ENCODE measurements at regions of chr18 and their contacts with region 1.

Region 1: DNA sequence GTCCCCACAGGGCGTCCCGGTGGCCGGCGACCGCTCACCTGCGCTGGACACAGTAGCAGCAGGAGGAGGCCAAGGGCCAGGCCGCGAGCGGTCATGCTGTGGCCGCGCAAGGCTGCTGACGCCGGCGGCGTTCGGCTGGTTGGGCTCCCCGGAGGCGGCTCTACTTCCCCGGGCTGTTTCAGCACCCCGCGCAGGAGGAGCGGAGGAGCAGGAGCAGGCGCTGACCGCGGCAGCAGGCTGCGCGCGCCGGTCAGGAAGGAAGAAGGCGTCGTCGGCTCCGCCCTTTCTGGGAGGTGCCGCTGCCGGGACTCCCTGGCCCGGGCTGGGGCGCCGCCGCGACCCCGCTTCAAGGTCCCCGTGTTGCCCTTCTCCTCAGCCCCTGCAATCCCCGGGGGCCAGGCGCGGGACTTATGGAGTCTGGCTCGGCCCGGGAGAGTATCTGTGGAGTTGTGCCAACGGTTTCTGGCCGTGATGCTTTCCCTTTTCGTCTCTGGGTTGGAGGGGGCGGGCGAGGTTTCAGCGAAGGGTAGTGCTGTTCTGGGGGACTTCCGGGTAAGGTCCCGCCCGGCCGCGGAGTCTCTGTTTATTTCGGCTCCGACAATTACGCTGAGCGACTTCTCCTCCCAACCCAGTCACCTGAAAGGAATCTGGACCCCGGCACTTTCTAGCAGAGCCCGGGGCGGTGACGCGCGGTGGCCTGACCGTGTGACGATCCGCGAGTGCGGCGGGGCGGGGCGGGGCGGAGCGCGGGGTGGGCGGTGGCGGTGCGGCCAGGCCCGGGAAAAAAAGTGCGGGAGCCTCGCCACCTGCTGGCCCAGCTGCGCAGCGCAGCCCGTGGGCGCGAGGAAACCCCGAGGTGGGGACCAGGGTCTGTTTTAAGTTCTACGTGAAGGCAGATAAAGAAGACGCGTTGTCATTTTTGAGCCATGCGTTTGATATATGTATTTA is at the start of gene NPC1:
- H3K4me3 Mint-ChIP-seq: peak within 1 kb of the TSS; percentile 89
- H3K27ac Mint-ChIP-seq: peak within 1 kb of the TSS; percentile 96
- H3K4me1 Mint-ChIP-seq: peaks cover 47% of the 10 kb centered on the region
- H3K27me3 Mint-ChIP-seq: peaks cover 11% of the 10 kb centered on the region

Region 2: DNA sequence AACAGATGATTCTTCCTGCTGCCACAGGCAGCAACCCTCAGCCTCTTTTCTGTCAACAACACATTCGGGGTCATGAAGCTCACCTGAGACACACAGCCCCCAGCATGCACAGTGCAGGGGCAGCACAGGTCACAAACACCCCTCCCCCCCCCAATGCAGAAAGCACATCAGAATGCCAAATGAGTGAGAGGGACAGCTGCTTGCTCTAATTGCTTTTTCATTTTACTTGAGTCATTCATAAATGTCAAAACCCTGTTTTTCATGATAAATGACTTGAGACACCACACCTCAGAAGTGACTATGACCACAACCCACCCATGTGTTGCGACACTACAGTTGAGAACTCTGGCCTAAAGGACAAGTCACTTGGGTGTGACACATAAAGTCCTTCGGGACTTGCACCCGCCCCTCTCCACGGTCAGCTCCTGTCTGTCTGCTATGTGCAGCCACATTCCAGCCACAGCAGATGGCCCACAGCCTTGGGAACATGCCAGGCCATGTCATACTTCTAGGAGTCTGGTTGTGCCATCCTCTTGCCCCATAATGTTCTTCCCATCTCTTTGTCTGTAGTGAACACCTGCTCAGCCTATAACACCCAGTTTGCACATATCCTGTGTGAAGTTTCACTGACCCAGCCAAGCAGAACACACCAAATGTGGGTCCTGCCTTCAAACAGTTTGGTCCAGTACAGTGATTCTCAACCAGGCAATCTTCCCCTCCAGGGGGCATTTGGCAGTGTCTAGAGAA is 163.7 kb before region 1 on chr18:
- intact Hi-C with region 1: no loop called
- H3K4me3 Mint-ChIP-seq: no peak overlapping the region
- H3K27ac Mint-ChIP-seq: peak overlapping the region; percentile 71
- H3K4me1 Mint-ChIP-seq: peaks cover 30% of the 10 kb centered on the region
- H3K27me3 Mint-ChIP-seq: no peaks in the 10 kb centered on the region

Region 3: DNA sequence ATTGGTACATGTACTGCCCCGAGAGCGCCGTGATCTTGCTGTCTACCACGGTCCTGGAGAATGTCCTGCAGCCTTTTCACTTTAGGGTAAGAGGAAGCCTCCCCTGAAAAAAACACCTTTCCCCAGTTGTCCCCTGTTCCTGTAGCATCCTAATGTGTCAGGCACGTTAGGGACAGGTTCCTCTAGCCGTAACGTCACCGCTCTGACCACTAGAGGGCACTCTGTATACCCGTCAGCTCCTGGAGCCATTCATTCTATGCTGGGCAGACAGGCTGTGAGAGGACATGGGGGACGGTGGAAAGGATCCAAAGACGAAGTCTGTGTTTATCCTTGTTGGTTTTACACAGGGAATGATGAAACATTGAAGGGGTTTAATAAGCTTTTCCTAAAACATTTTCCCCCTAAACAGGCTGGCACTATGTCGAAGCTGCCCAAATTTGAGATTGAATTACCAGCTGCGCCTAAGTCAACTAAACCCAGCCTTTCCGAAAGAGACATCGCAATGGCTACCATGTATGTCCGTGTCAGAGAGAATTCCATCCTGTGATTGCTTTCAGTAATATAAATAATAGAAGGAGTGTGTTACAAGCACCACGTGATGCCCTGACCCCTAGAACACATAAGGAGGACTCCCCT is 70.5 kb before region 1 on chr18:
- intact Hi-C with region 1: loop called (anchors 1 kb)
- H3K4me3 Mint-ChIP-seq: no peak overlapping the region
- H3K27ac Mint-ChIP-seq: no peak overlapping the region
- H3K4me1 Mint-ChIP-seq: peaks cover 13% of the 10 kb centered on the region
- H3K27me3 Mint-ChIP-seq: no peaks in the 10 kb centered on the region